Activated naive CD4-positive, alpha-beta T cell treated with anti-CD3 and anti-CD28 coated beads for 36 hours (primary cell): ENCODE measurements at regions of chrX and their contacts with region 1.

Region 1: DNA sequence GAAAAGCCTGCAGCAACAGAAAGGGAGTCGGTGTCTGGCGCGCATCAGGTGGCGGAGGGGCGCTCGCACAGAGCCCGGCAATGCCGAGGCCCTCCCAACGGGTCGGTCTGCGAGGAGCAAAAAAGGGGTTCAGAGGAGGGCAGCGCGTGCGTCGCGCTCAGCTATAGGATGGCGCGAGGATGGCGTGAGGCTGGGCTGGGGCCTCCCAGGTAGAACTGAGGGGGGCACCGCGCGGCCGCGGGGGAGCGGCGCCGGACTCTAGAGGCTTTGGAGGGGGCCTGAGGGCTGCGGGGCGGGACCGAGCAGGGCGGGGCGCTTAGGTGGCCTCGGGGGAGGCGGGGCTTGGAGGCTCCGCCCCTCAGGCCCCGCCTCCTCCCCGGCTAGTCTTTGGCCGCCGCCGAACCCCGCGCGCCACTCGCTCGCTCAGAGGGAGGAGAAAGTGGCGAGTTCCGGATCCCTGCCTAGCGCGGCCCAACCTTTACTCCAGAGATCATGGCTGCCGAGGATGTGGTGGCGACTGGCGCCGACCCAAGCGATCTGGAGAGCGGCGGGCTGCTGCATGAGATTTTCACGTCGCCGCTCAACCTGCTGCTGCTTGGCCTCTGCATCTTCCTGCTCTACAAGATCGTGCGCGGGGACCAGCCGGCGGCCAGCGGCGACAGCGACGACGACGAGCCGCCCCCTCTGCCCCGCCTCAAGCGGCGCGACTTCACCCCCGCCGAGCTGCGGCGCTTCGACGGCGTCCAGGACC is at the start of gene PGRMC1:
- DNase-seq: peak; percentile 81
- H3K4me3 Mint-ChIP-seq: peak within 1 kb of the TSS; percentile 86
- H3K27ac Mint-ChIP-seq: peak within 1 kb of the TSS; percentile 71
- H3K4me1 Mint-ChIP-seq: peaks cover 30% of the 10 kb centered on the region
- H3K27me3 Mint-ChIP-seq: no peaks in the 10 kb centered on the region
- total RNA-seq, gene PGRMC1: 26.3 to 27.0 TPM

Region 2: GRCh38 chrX:118974908-118975671 is 261.0 kb before region 1 on chrX:
- CTCF ChIA-PET with region 1: no interaction called
- intact Hi-C with region 1: loop called (anchors 1 kb)
- DNase-seq: peak; percentile 59
- H3K4me3 Mint-ChIP-seq: peak overlapping the region; percentile 83
- H3K27ac Mint-ChIP-seq: peak overlapping the region; percentile 88
- H3K4me1 Mint-ChIP-seq: peaks cover 12% of the 10 kb centered on the region
- H3K27me3 Mint-ChIP-seq: peaks cover 6% of the 10 kb centered on the region

Region 3: DNA sequence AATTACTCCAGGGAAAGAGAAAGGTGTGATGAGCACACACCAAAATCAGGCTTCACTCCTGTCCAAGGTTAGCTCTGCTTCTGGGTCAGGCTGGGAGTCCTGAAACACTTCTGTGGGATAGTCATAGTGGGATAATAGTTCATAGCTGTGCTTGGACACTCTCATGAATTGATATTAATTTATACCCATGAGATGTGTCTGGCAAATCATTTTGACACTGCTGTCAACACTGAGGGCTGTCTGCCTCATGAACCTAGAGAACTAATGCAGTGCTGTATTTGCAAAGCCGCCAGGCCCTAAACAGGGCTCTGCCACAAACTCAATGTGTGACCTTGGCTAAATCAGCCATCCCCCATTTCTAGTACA is 24.4 kb before region 1 on chrX:
- CTCF ChIA-PET with region 1: no interaction called
- intact Hi-C with region 1: no loop called
- DNase-seq: no peak
- H3K4me3 Mint-ChIP-seq: no peak overlapping the region
- H3K27ac Mint-ChIP-seq: no peak overlapping the region
- H3K4me1 Mint-ChIP-seq: no peaks in the 10 kb centered on the region
- H3K27me3 Mint-ChIP-seq: no peaks in the 10 kb centered on the region

Region 4: GRCh38 chrX:119266364-119266995 is 30.4 kb after region 1 on chrX:
- CTCF ChIA-PET with region 1: no interaction called
- intact Hi-C with region 1: loop called (anchors 2 kb)
- DNase-seq: peak; percentile 25
- H3K4me3 Mint-ChIP-seq: no peak overlapping the region
- H3K27ac Mint-ChIP-seq: no peak overlapping the region
- H3K4me1 Mint-ChIP-seq: no peaks in the 10 kb centered on the region
- H3K27me3 Mint-ChIP-seq: peaks cover 2% of the 10 kb centered on the region

Region 5: DNA sequence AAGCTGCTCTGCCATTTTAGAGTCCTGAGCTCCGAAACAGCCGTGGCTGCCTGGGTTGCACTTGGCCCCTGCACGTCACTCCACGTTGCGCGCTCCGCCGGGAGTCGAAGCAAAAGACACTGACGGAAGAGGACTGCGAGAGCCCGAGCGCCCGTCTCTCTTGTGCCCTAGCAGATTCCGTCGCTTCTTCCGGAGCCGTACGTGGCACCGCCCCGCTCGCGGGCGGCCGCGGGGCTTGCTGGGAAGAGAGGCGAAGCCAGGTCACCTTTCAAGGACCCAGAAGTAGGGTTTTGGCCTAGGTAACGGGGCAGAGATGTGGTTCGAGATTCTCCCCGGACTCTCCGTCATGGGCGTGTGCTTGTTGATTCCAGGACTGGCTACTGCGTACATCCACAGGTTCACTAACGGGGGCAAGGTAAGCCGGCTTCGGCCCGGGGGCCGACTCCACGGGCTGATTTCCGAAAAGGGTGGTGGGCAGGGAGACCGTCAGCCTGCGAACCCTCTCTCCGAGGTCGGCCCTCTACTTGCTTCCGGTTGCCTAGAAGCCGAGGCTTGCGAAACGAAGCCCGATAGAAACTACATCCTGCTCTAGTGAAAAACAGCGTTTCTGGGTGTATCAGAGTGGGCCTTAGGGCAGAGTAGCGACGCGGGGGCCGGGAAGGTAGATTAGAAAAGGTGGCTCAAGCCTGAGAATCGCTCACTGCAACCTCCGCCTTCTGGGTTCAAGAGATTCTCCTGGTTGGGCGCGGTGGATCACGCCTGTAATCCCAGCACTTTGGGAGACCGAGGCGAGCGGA is 635.8 kb after region 1 on chrX and contains the starts of genes NDUFA1 and RNF113A:
- CTCF ChIA-PET with region 1: no interaction called
- intact Hi-C with region 1: loop called (anchors 10 kb)
- DNase-seq: peak; percentile 86
- H3K4me3 Mint-ChIP-seq: peak within 1 kb of the TSS; percentile 97
- H3K27ac Mint-ChIP-seq: peak within 1 kb of the TSS; percentile 98
- H3K4me1 Mint-ChIP-seq: peaks cover 13% of the 10 kb centered on the region
- H3K27me3 Mint-ChIP-seq: no peaks in the 10 kb centered on the region
- total RNA-seq, gene NDUFA1: 105 to 107 TPM
- total RNA-seq, gene RNF113A: 20.8 to 22.0 TPM